SK-N-SH (cell line): ENCODE measurements at regions of chr10 and their contacts with region 1.

Region 1: GRCh38 chr10:71999360-72000072 is 35.3 kb downstream of the CHST3 start:
- DNase-seq: peak; percentile 91
- H3K4me3 ChIP-seq: no peak overlapping the region
- H3K27ac ChIP-seq: peak overlapping the region; percentile 80 to 90
- H3K4me1 ChIP-seq: peaks cover 19 to 38% of the 10 kb centered on the region in 2 experiments
- H3K27me3 ChIP-seq: no peaks in the 10 kb centered on the region
- CTCF ChIP-seq: no peak
- EP300 ChIP-seq: peak in 1 of 2 experiments; percentile 81; a peak in 2 of 4 replicates
- RAD21 ChIP-seq: no peak

Region 2: GRCh38 chr10:71963756-71964668 is 35.5 kb before region 1 on chr10 and contains the start of gene CHST3:
- CTCF ChIA-PET with region 1: interaction called, 4 read pairs
- POLR2A ChIA-PET with region 1: interaction called, 10 read pairs
- DNase-seq: peak; percentile 84
- H3K4me3 ChIP-seq: peak within 1 kb of the TSS; percentile 75 to 99
- H3K27ac ChIP-seq: peak within 1 kb of the TSS; percentile 28 to 32; a peak in 3 of 4 replicates
- H3K4me1 ChIP-seq: peaks cover 18 to 25% of the 10 kb centered on the region in 2 experiments; a peak in 3 of 4 replicates
- H3K27me3 ChIP-seq: no peaks in the 10 kb centered on the region
- CTCF ChIP-seq: no peak
- EP300 ChIP-seq: no peak
- RAD21 ChIP-seq: no peak
- polyA plus RNA-seq, gene CHST3: 6.0 and 6.1 TPM in 2 replicates